ENCODE measurements at regions of chrX and their contacts with region 1.

Region 1: GRCh38 chrX:50691820-50692219 is 122.2 kb downstream of the SHROOM4 start:
- DNase-seq: no peak
- ATAC-seq: peak in 1 of 2 donors; percentile 39
- H3K4me3 ChIP-seq: no peak overlapping the region
- H3K27ac ChIP-seq: no peak overlapping the region
- H3K4me1 ChIP-seq: no peaks in the 10 kb centered on the region
- H3K27me3 ChIP-seq: no peaks in the 10 kb centered on the region
- CTCF ChIP-seq: peak in 4 of 5 experiments; percentile 24 to 65 (median 48)
- POLR2A ChIP-seq: no peak

Region 2: GRCh38 chrX:50456712-50457484 is 234.9 kb before region 1 on chrX:
- in situ Hi-C with region 1: no loop called
- intact Hi-C with region 1: no loop called
- DNase-seq: no peak
- ATAC-seq: no peak
- H3K4me3 ChIP-seq: no peak overlapping the region
- H3K27ac ChIP-seq: no peak overlapping the region
- H3K4me1 ChIP-seq: no peaks in the 10 kb centered on the region
- H3K27me3 ChIP-seq: peaks cover 0 to 17% (median 0%) of the 10 kb centered on the region in 3 donors
- CTCF ChIP-seq: no peak
- POLR2A ChIP-seq: no peak

Region 3: DNA sequence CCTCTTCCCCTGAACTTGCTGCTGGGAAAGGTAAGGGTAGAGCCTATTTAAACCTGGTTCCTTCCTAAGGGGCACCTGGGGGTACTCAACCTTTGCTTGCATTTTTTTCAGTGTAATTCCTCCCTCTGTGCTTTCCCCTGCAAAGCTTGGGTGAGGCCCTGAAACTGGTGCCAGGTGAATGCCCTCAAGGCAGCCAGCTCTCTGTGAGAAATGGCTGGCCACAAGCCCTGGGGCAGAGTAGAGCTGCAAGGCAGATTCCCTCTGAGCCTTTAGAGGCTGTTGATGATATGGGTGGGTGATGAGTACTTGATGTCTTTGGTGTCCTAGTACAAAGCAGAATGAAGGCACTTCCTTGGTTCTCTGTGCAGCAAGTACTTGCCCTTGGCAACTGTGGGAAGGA is 95.8 kb before region 1 on chrX:
- in situ Hi-C with region 1: no loop called
- intact Hi-C with region 1: no loop called
- DNase-seq: no peak
- ATAC-seq: no peak
- H3K4me3 ChIP-seq: no peak overlapping the region
- H3K27ac ChIP-seq: peak overlapping the region in 1 of 4 donors; percentile 15
- H3K4me1 ChIP-seq: peaks cover 0 to 3% of the 10 kb centered on the region in 2 donors
- H3K27me3 ChIP-seq: no peaks in the 10 kb centered on the region
- CTCF ChIP-seq: no peak
- POLR2A ChIP-seq: no peak

Region 4: GRCh38 chrX:50913520-50913919 is 221.7 kb after region 1 on chrX:
- in situ Hi-C with region 1: no loop called
- intact Hi-C with region 1: loop called (anchors 10 kb)
- DNase-seq: no peak
- ATAC-seq: no peak
- H3K4me3 ChIP-seq: no peak overlapping the region
- H3K27ac ChIP-seq: no peak overlapping the region
- H3K4me1 ChIP-seq: no peaks in the 10 kb centered on the region
- H3K27me3 ChIP-seq: no peaks in the 10 kb centered on the region
- CTCF ChIP-seq: no peak
- POLR2A ChIP-seq: no peak

Region 5: GRCh38 chrX:51420610-51421009 is 728.8 kb after region 1 on chrX:
- in situ Hi-C with region 1: no loop called
- intact Hi-C with region 1: loop called (anchors 10 kb)
- DNase-seq: no peak
- ATAC-seq: no peak
- H3K4me3 ChIP-seq: no peak overlapping the region
- H3K27ac ChIP-seq: no peak overlapping the region
- H3K4me1 ChIP-seq: no peaks in the 10 kb centered on the region
- H3K27me3 ChIP-seq: peaks cover 0 to 10% (median 0%) of the 10 kb centered on the region in 3 donors
- CTCF ChIP-seq: peak in 3 of 5 experiments; percentile 41 to 72 (median 48)
- POLR2A ChIP-seq: no peak